Dendritic cell treated with granulocyte-macrophage colony-stimulating factor and Interleukin-4, amounts not matched to agents 40 ng/mL and 50 ng/mL, for 4 days (primary cell): ENCODE measurements at regions of chr2 and their contacts with region 1.

Region 1: GRCh38 chr2:219253753-219254590 is at the start of gene TUBA4A:
- H3K4me3 Mint-ChIP-seq: peak within 1 kb of the TSS; percentile 86
- H3K27ac Mint-ChIP-seq: peak within 1 kb of the TSS; percentile 47
- H3K4me1 Mint-ChIP-seq: peaks cover 53% of the 10 kb centered on the region
- H3K27me3 Mint-ChIP-seq: peaks cover 2% of the 10 kb centered on the region

Region 2: GRCh38 chr2:219218732-219219701 is 35.0 kb before region 1 on chr2 and contains the start of gene ABCB6:
- intact Hi-C with region 1: loop called (anchors 5 kb)
- H3K4me3 Mint-ChIP-seq: peak within 1 kb of the TSS; percentile 74
- H3K27ac Mint-ChIP-seq: peak within 1 kb of the TSS; percentile 94
- H3K4me1 Mint-ChIP-seq: peaks cover 56% of the 10 kb centered on the region
- H3K27me3 Mint-ChIP-seq: peaks cover 42% of the 10 kb centered on the region

Region 3: DNA sequence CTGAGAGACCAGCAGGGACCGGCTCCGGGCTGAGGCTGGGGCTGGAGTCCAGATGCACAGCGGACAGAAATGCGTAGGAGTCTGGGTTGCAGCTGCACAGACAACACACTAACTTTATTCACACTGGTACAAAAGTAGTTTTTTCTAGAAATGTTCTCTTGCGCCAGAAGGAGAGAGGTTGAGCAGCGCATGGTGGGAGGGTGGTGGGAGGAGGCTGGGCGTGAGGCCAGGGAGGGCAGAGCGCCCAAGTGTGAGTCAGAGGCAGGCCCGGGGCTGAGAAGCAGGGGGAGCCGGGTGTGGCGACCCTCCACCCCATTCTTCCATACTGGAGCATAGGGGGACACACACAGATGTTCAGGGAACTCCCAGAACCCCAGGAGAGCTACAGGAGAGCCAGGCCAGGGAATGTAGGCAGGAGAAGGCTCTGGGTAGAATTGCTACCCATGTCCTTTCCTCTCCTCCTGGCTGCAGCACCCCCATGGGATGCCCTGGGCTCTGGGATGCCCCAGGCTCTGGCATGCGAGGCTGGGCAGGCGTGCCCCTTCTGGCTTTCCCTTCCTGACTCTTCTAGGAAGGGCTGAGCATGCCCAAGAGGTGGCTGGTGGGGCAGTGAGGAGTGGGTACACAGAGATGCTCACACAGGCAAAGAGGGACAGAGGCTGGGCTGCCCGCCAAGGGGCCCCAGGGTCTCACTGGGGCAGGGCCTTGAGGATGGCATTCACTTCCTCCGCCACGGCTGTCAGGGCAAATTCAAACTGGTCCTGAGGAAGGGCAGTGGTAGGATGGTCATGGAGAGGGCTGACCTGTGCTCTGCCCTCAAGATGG is 35.8 kb after region 1 on chr2:
- intact Hi-C with region 1: no loop called
- H3K4me3 Mint-ChIP-seq: no peak overlapping the region
- H3K27ac Mint-ChIP-seq: no peak overlapping the region
- H3K4me1 Mint-ChIP-seq: peaks cover 34% of the 10 kb centered on the region
- H3K27me3 Mint-ChIP-seq: peaks cover 24% of the 10 kb centered on the region